GM23248 (cell line): ENCODE measurements at regions of chr5 and their contacts with region 1.

Region 1: DNA sequence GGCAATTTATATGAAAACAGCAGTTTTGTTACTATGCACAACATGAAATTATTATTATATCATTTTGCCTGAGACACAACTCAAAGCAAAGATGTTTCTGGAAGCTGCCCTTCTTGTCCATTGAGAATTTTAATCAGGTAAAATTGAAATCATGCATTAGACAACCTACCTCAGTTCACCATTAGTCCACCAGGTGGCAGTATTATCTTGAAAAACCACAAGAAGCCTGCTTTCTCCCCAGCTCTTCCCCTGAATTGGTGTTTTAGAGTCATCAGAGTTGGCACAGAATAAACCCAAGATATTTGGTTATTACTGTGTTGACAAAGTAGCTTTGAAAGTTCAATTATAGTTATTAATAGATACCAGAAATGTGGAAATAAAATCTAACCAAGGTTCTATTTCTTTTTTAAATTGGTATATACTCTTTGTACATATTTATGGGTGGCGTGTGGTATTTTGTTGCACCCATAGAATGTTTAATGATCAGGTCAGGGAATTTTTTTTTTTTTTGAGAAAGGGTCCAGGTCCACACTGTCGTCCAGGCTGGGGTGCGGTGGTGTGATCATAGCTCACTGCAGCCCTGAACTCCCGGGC is 25.7 kb downstream of the UTP15 start:
- DNase-seq: peak; percentile 89
- H3K4me3 ChIP-seq: no peak overlapping the region
- H3K27ac ChIP-seq: peak overlapping the region; percentile 41
- H3K4me1 ChIP-seq: peaks cover 26% of the 10 kb centered on the region
- H3K27me3 ChIP-seq: no peaks in the 10 kb centered on the region

Region 2: GRCh38 chr5:73792687-73793320 is 201.6 kb after region 1 on chr5:
- in situ Hi-C with region 1: loop called (anchors 5 kb)
- DNase-seq: peak; percentile 77
- H3K4me3 ChIP-seq: no peak overlapping the region
- H3K27ac ChIP-seq: no peak overlapping the region
- H3K4me1 ChIP-seq: peaks cover 22% of the 10 kb centered on the region
- H3K27me3 ChIP-seq: no peaks in the 10 kb centered on the region

Region 3: DNA sequence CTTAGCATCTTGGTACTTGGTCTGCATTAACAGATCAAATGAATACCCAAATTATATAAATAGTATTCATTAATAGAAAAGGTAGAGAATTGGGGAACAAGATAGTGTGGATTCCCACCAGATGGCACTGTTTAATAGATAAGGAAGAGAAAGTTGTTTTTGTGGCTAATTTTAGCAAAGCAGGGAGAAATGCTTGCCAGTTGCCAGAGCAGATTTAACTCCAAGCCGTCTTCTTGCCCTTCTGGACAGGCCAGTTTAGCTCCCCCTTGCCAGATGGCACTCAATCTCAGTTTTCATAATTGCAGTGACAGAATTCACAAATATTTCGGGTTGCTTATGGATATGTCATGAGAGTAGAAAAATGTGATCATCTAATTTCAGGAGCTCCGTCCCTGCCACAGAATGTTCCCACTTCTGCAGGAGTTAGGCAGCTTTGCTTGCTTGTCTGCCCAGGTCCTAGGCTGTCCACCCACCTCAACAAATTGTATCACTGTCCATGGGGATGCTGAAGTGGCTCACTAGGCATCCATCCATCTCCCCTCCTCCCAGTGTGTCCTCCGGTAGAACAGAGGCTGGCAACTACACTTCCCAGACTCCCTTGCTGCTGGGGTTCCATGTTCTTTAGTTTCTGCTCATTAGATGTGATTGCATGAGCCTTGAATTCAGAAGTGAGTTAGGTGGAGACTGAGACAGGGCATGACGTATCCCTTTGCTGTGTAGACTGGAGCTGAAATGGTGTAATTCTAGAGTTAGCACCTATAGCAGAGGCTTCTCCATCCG is 1082.0 kb after region 1 on chr5:
- in situ Hi-C with region 1: loop called (anchors 25 kb)
- DNase-seq: peak; percentile 77
- H3K4me3 ChIP-seq: peak overlapping the region; percentile 59
- H3K27ac ChIP-seq: no peak overlapping the region
- H3K4me1 ChIP-seq: 0 out of 2 replicates have a peak, but pooled peaks cover 5% of the 10 kb centered on the region
- H3K27me3 ChIP-seq: no peaks in the 10 kb centered on the region